AG04449 (cell line): ENCODE measurements at regions of chr6 and their contacts with region 1.

Region 1: DNA sequence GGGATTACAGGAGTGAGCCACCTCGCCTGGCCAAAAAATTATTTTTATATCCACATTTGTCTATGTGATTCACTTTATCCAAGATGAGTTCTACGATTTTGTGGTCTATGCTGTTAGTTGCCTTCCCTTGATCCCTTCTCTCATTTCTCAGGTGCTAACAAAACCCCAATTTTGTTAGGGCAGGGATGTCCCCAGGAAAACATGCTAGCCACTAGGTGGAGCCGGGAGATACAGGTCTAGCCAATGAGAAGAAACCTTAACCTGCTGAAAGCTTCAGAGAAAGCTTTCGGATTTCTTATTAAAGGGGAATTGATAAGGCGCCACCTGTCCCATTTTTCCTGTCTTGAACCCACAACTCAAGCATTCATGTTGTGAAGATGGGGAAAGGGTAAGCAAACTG is 167.4 kb upstream of the OLIG3 start:
- DNase-seq: no peak
- H3K4me3 ChIP-seq: no peak overlapping the region
- CTCF ChIP-seq: peak; percentile 38

Region 2: GRCh38 chr6:137975188-137975940 is 313.8 kb after region 1 on chr6:
- CTCF ChIA-PET with region 1: interaction called, 11 read pairs
- POLR2A ChIA-PET with region 1: no interaction called
- DNase-seq: no peak
- H3K4me3 ChIP-seq: no peak overlapping the region
- CTCF ChIP-seq: no peak